Tibial artery (tissue), 4 donors: ENCODE measurements at regions of chr3 and their contacts with region 1.

Region 1: DNA sequence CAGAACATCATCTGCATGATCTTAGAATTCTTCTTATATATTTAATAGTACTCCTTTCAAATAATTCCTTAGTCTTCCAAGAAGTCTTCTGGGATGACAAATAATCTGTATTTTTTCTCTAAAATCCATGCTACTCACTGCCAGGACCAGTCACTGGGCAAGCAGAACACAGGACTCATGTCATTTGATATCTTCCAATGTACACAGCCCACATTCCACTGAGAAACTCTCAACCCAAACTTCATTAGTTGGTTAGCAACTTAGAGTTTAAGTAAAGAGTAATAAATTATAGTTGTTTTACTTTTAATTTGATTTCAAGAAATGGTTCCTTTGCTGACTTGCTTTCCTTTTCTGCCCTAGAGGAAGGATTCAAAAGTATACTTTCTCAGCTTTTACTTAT is 317.0 kb downstream of the VGLL3 start:
- DNase-seq: no peak
- H3K4me3 ChIP-seq: no peak overlapping the region
- H3K27ac ChIP-seq: no peak overlapping the region
- H3K4me1 ChIP-seq: no peaks in the 10 kb centered on the region
- H3K27me3 ChIP-seq: no peaks in the 10 kb centered on the region
- CTCF ChIP-seq: no peak

Region 2: DNA sequence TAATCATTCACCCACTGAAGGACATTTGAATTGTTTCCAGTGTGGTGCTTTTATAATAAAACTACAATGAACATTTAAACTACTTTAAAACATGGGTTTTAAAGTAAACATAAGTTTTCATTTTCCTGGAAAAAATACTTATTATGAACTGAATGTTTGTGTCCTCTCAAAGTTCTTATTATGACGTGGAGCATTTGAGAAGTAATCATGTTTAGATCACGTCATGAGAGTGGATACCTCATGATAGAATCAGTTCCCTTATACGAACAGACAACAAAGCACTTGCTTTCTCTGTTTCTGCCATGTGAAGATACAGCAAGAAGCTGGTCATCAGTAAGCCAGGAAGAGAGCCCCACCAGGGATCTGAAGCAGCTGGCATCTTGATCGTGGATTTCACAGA is 10.5 kb after region 1 on chr3:
- intact Hi-C with region 1: loop called (anchors 1 kb)
- DNase-seq: no peak
- H3K4me3 ChIP-seq: no peak overlapping the region
- H3K27ac ChIP-seq: no peak overlapping the region
- H3K4me1 ChIP-seq: no peaks in the 10 kb centered on the region
- H3K27me3 ChIP-seq: no peaks in the 10 kb centered on the region
- CTCF ChIP-seq: no peak

Region 3: GRCh38 chr3:86708908-86709307 is 34.9 kb after region 1 on chr3:
- intact Hi-C with region 1: no loop called
- DNase-seq: no peak
- H3K4me3 ChIP-seq: no peak overlapping the region
- H3K27ac ChIP-seq: no peak overlapping the region
- H3K4me1 ChIP-seq: no peaks in the 10 kb centered on the region
- H3K27me3 ChIP-seq: no peaks in the 10 kb centered on the region
- CTCF ChIP-seq: no peak